GM23248 (cell line): ENCODE measurements at regions of chr5 and their contacts with region 1.

Region 1: GRCh38 chr5:77143998-77144836 is 57.1 kb upstream of the ZBED3 start:
- DNase-seq: peak; percentile 90
- H3K4me3 ChIP-seq: no peak overlapping the region
- H3K27ac ChIP-seq: no peak overlapping the region
- H3K4me1 ChIP-seq: peaks cover 15% of the 10 kb centered on the region
- H3K27me3 ChIP-seq: no peaks in the 10 kb centered on the region

Region 2: DNA sequence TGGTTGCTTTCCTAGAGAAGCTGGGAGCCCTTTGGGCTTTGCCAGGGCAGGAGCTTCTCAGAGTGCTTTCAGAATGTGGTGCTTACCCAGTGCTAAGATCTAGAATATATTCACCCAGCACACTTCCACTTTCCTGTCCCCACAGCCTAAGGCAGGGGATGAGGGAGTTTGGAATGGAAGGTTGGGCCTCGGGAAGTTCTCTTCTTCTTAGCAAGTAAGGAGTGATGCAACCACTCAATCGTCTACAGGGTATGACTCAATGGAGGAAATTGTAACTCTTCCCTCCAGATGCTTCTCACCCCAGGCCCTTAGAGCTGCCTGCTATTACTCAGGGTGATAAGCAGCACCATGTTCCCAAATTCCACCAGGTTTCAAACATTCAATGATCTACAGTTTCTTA is 144.8 kb before region 1 on chr5:
- in situ Hi-C with region 1: no loop called
- DNase-seq: peak; percentile 86
- H3K4me3 ChIP-seq: no peak overlapping the region
- H3K27ac ChIP-seq: no peak overlapping the region
- H3K4me1 ChIP-seq: no peaks in the 10 kb centered on the region
- H3K27me3 ChIP-seq: peaks cover 14% of the 10 kb centered on the region

Region 3: DNA sequence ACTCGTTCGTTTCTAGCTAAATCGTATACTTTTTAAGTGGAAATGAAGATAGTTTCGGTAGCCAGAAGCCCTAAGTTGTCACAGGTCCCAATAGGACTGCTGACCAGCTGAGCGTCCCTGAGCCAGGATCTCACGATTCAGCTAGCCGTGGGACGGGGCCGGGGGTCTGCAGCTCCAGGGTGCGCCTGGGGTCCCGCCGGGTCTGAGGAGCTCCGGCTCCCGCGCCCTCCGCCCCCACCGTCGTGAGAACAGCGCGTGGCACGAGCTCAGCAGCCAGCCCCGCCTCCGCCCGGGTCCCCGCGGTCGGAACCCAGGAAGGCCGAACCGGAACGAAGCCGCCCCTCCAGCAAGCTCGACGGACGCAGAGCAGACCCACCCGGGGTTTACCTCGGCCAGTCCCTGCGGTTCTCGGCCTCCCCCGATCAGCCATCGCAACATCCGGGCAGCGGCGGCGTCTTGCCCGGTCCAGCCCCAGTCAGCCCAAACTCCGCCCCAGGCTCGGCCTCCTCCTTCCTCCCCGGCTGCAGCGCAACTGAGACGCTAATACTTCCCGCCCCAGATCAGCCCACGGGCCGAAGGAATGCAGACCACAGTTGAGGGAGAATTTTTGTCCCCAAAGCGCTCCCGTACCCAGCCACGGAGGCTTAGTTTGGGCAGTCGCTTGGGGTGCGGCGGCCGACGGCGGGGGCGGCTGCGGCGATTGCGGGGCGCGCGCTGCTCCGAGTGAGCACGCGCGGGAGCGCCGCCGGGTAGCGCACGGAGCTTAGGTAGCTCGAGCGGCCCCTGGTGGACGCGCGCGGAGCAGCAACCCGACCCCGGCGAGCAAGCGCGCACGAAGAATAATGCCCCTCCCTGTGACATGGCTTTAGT is 347.8 kb after region 1 on chr5 and contains the start of gene WDR41:
- in situ Hi-C with region 1: loop called (anchors 10 kb)
- DNase-seq: peak; percentile 97
- H3K4me3 ChIP-seq: peak within 1 kb of the TSS; percentile 82
- H3K27ac ChIP-seq: peak within 1 kb of the TSS; percentile 91
- H3K4me1 ChIP-seq: peaks cover 15% of the 10 kb centered on the region; the same call in 1 of the 2 replicates
- H3K27me3 ChIP-seq: no peaks in the 10 kb centered on the region
- total RNA-seq, gene WDR41: 173 TPM in 2 replicates